Activated CD8-positive, alpha-beta memory T cell treated with anti-CD3 and anti-CD28 coated beads, Interleukin-2, amount 10 ng/mL, durations not matched to agents 7 days and 5 days (primary cell): ENCODE measurements at regions of chr3 and their contacts with region 1.

Region 1: DNA sequence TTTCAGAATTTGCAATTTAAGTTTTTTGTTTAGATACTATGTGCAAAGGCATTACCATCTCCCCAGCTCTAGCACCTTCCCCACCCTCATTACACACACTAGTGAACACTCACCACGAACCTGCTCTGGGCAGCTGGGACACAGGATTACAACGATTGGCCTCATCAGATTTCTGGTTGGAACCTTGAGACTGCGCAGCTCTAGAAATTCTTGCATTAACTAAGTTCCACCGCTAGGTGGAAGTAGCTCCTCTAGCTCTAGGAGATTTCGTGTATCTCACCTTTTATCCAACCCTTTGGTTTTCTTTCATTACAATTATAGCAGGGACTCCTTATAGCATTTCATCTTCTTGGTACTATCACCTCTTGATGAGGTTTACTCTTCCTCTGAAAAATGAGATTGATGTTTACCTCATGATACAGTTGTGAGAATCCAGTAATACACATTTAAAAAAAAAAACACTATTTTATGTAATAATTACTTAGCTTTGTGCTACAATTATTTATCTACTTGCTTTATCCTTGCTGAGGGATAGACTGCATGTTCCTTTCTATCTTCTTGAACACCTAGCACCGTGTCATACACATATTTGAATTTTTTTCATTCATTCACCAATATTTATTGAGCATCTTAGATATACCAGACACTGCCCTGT is 28.7 kb upstream of the PLOD2 start:
- DNase-seq: no peak
- ATAC-seq: peak; percentile 63
- H3K4me3 Mint-ChIP-seq: no peak overlapping the region
- H3K27ac Mint-ChIP-seq: no peak overlapping the region
- H3K4me1 Mint-ChIP-seq: no peaks in the 10 kb centered on the region
- H3K27me3 Mint-ChIP-seq: peaks cover 9% of the 10 kb centered on the region

Region 2: DNA sequence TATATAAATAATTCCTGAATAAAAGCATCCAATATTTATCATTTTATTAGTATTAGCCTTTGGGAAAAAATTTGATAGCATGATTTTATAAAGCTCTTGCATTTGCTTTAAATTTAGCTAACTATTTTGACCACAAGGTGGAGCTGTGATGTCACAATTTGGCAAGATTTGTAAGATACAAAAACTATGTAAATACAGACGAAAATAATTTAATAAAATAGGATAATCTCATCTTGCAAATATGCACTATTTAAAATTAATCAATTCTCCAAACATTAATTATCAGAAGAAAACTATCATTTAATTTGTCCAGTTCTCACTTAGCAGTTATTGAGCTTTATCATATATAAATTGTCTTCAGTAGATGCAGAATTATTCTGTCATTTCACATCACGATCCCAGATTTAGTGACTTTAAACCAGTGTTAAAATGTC is 124.1 kb before region 1 on chr3:
- CTCF ChIA-PET with region 1: interaction called, 18 read pairs
- DNase-seq: no peak
- ATAC-seq: no peak
- H3K4me3 Mint-ChIP-seq: no peak overlapping the region
- H3K27ac Mint-ChIP-seq: no peak overlapping the region
- H3K4me1 Mint-ChIP-seq: no peaks in the 10 kb centered on the region
- H3K27me3 Mint-ChIP-seq: peaks cover 3% of the 10 kb centered on the region

Region 3: DNA sequence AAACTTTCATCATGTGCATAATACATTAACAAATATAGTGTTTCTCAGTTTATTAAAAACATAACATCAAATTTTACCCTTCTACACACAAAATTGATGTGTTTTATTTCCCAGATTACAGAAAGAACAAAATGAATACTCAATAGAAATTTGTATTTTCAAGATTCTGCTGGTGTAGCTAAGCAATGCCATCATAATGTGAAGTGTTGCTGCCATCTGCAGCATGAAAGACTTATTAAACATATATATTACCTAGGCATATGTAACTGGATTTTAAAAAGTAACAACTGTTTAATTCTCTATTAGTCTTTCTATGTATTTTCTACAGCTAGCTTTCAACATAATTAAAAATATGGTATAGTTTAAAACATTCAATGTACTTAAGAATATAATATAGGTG is 388.0 kb after region 1 on chr3:
- CTCF ChIA-PET with region 1: interaction called, 10 read pairs
- DNase-seq: no peak
- ATAC-seq: peak; percentile 57
- H3K4me3 Mint-ChIP-seq: no peak overlapping the region
- H3K27ac Mint-ChIP-seq: no peak overlapping the region
- H3K4me1 Mint-ChIP-seq: peaks cover 3% of the 10 kb centered on the region
- H3K27me3 Mint-ChIP-seq: peaks cover 17% of the 10 kb centered on the region